Dorsolateral prefrontal cortex (tissue), 120 donors: ENCODE measurements at regions of chr11 and their contacts with region 1.

Region 1: GRCh38 chr11:119525867-119526196 is 102.9 kb upstream of the THY1 start:
- DNase-seq: peak in 1 of 10 donors; percentile 21
- H3K4me3 ChIP-seq: no peak overlapping the region
- H3K27ac ChIP-seq: peak overlapping the region in 3 of 59 donors; percentile 7 to 51 (median 35)
- H3K27me3 ChIP-seq: no peaks in the 10 kb centered on the region
- CTCF ChIP-seq: no peak

Region 2: GRCh38 chr11:119491753-119492510 is 33.9 kb before region 1 on chr11:
- intact Hi-C with region 1: loop called in 1 of 2 experiments (anchors 2 kb)
- DNase-seq: peak in 2 of 10 donors; percentile 35 to 57
- H3K4me3 ChIP-seq: no peak overlapping the region
- H3K27ac ChIP-seq: peak overlapping the region in 2 of 59 donors; percentile 10 to 39
- H3K27me3 ChIP-seq: no peaks in the 10 kb centered on the region
- CTCF ChIP-seq: peak in 47 of 56 donors; percentile 17 to 60 (median 45)